ENCODE measurements at regions of chr7 and their contacts with region 1.

Region 1: DNA sequence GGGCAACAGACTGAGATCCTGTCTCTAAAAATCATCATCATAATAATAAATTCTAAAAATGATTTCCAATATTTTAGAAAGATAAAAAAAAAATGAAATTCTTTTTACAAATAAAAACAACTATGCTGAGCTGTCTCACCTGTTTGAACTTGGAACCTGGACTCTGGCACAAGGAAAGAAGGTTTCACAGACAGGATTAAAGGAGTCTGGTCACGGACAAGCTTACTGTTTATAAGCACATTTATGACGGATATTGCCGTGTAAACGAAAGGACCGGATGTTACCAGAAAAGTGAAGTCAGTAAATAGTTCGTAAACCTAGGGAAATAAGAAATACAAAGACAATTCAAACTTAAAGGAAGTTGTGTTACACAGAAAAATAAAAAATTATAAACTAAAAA is 70.2 kb downstream of the KIAA1549 start:
- DNase-seq: no peak
- H3K4me3 ChIP-seq: no peak overlapping the region
- CTCF ChIP-seq: no peak

Region 2: DNA sequence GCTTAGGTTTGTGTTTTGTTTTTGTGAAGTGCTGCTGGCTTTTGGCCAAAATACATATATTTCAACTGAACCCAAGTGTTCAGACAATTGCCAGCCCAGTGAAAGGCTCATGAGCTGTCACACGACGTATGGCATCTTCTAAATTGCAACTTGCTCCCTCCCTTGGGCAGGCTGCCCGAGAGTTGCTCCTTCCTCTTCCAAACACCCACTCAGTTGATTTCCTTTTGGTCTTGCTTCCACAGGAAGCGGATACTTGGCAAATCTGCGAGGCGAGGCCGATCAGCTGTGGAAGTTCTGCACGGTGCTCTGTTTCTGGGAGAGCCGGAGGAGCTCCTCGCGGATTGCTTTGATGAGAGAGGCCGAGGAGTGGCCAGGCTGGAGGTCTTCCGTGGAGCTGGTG is 73.4 kb before region 1 on chr7:
- in situ Hi-C with region 1: no loop called
- DNase-seq: no peak
- H3K4me3 ChIP-seq: no peak overlapping the region
- CTCF ChIP-seq: no peak

Region 3: GRCh38 chr7:138854115-138854645 is 56.8 kb before region 1 on chr7:
- in situ Hi-C with region 1: loop called (anchors 5 kb)
- DNase-seq: no peak
- H3K4me3 ChIP-seq: no peak overlapping the region
- CTCF ChIP-seq: no peak